Activated naive CD4-positive, alpha-beta T cell treated with anti-CD3 and anti-CD28 coated beads for 36 hours (primary cell): ENCODE measurements at regions of chr7 and their contacts with region 1.

Region 1: GRCh38 chr7:98251841-98252639 is at the start of gene TECPR1:
- DNase-seq: peak; percentile 90
- H3K4me3 Mint-ChIP-seq: peak within 1 kb of the TSS; percentile 93
- H3K27ac Mint-ChIP-seq: peak within 1 kb of the TSS; percentile 94
- H3K4me1 Mint-ChIP-seq: peaks cover 53% of the 10 kb centered on the region
- H3K27me3 Mint-ChIP-seq: no peaks in the 10 kb centered on the region
- total RNA-seq, gene TECPR1: 29.8 to 36.7 TPM

Region 2: DNA sequence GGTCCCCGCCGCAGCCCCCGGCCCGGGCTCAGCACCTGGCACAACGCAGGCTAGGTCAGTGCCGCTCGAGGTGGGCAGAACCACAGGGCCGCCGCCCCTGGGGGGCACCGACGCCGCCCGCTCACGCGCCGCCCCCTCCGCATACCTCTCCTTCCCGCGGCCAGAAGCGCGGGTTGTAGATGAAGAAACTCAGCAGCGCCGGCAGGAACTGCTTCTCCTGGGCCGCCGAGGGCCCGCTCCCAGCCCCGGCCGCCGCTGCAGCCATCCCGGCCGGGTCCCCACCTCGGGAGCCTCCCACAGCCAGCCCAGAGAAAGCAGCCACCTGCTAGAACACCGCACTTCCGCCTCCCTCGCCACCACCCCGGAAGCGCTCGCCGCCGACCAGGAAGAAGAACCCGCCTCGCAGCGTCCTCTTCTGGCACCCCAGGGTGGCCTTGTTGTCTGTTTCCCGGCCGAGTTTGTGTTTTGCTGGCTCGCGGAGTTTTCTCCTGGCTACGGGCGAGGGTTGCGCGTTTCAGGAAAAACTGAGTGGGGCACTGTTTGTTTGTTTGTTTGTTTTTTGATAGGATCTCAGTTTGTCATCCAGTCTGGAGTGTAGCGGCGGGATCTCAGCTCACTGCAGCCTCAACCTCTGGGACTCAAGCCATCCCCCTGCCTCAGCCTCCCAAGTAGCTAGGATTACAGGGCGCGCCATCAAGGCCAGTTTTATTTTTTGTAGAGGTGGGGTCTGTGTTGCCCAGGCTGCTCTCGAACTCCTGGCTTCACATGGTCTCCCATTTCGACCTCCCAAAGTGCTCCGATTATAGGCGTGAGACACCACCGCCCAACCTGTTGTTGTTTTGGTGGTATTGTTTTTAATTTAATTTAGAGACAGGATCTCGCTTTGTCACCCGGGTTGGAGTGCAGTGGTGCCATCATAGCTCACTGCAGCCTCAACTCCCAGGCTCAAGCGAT is 279.8 kb before region 1 on chr7:
- CTCF ChIA-PET with region 1: no interaction called
- intact Hi-C with region 1: loop called (anchors 2 kb)
- DNase-seq: peak; percentile 91
- H3K4me3 Mint-ChIP-seq: peak overlapping the region; percentile 94
- H3K27ac Mint-ChIP-seq: peak overlapping the region; percentile 95
- H3K4me1 Mint-ChIP-seq: peaks cover 27% of the 10 kb centered on the region
- H3K27me3 Mint-ChIP-seq: no peaks in the 10 kb centered on the region

Region 3: DNA sequence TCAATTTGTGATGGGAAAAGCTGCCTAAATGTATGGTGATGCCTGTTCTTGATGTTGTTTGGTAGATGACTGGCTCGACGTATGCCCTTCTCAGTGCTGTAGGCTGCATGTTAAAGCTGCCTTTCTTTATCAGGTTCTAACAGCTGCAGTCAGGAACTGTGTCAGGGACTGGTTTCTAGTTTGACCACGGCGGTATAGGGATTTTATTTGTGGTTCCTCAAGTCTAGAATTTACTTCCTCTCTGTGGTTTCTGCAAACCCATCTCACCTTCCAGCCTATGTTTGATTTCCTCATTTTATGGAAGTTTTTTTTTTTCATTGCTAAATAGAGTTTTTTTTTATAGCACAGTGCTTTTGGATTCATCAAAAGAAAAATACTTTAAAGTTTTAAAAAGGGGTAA is 118.9 kb before region 1 on chr7:
- CTCF ChIA-PET with region 1: no interaction called
- intact Hi-C with region 1: loop called (anchors 1 kb)
- DNase-seq: peak; percentile 41
- H3K4me3 Mint-ChIP-seq: no peak overlapping the region
- H3K27ac Mint-ChIP-seq: no peak overlapping the region
- H3K4me1 Mint-ChIP-seq: peaks cover 48% of the 10 kb centered on the region
- H3K27me3 Mint-ChIP-seq: no peaks in the 10 kb centered on the region